Posterior vena cava (tissue), 2 donors: ENCODE measurements at regions of chrX and their contacts with region 1.

Region 1: GRCh38 chrX:150449313-150449712 is 86.2 kb downstream of the MAMLD1 start:
- DNase-seq: no peak

Region 2: GRCh38 chrX:150375243-150375770 is 74.0 kb before region 1 on chrX:
- intact Hi-C with region 1: loop called in 1 of 2 experiments (anchors 5 kb)
- DNase-seq: no peak

Region 3: GRCh38 chrX:150421816-150422215 is 27.5 kb before region 1 on chrX:
- intact Hi-C with region 1: no loop called
- DNase-seq: peak; percentile 87

Region 4: DNA sequence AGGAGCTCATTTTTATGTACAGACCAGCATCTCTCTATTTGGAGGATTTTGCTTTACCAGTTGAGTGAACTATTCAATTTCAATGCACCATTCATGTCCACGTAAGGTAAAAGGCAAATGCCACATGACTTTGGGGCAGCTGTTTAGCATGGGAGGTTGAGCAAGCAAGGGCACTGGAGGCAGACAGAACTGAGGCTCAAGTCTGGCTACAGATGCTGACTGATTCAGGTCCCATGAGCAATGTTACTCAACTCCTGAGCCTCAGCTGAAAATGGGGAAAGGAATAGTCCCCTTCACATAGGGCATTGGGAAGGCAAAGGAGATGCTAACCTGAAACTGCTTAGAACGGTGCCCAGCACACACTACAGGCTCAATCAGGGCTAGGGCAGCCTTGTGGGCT is 26.1 kb after region 1 on chrX:
- intact Hi-C with region 1: loop called in 1 of 2 experiments (anchors 1 kb)
- DNase-seq: no peak